ENCODE measurements at regions of chr16 and their contacts with region 1.

Region 1: GRCh38 chr16:76768948-76769347 is 422.0 kb upstream of the MON1B start:
- DNase-seq: no peak
- ATAC-seq: peak; percentile 52
- H3K4me3 ChIP-seq: no peak overlapping the region
- H3K27ac ChIP-seq: no peak overlapping the region
- H3K4me1 ChIP-seq: no peaks in the 10 kb centered on the region
- H3K27me3 ChIP-seq: no peaks in the 10 kb centered on the region

Region 2: DNA sequence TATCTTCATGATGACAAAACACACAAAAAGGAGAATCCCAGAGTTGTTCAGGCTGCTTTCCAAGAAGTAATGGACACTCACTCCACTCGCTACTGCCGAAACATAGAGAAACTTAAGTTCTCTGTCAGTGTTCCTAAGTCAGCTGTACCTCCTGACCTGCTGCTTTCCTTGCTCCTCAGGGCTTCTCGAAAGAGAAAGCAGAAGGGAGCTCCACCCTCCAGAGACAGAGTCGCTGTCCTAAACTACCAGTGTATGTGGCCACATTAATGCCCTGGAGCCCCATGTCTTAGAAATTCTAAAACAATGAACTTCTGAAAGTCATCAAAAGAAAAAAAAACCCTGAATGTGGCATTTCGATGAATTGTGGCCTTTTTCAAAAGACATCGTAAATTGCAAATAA is 31.2 kb after region 1 on chr16:
- intact Hi-C with region 1: loop called in 1 of 2 experiments (anchors 1 kb)
- DNase-seq: no peak
- ATAC-seq: no peak
- H3K4me3 ChIP-seq: no peak overlapping the region
- H3K27ac ChIP-seq: no peak overlapping the region
- H3K4me1 ChIP-seq: no peaks in the 10 kb centered on the region
- H3K27me3 ChIP-seq: no peaks in the 10 kb centered on the region

Measured in aorta (tissue), 5 donors.